MCF 10A (cell line): ENCODE measurements at regions of chr11 and their contacts with region 1.

Region 1: GRCh38 chr11:7665473-7666291 is 7.6 kb downstream of the CYB5R2 start:
- DNase-seq: peak; percentile 81
- H3K4me3 Mint-ChIP-seq: no peak overlapping the region
- H3K27ac Mint-ChIP-seq: no peak overlapping the region
- H3K4me1 Mint-ChIP-seq: no peaks in the 10 kb centered on the region
- H3K27me3 Mint-ChIP-seq: no peaks in the 10 kb centered on the region
- CTCF ChIP-seq: peak; percentile 97

Region 2: GRCh38 chr11:7353100-7353499 is 312.6 kb before region 1 on chr11:
- CTCF ChIA-PET with region 1: interaction called, 17 read pairs
- POLR2A ChIA-PET with region 1: no interaction called
- intact Hi-C with region 1: loop called (anchors 2 kb)
- DNase-seq: peak; percentile 50
- H3K4me3 Mint-ChIP-seq: no peak overlapping the region
- H3K27ac Mint-ChIP-seq: no peak overlapping the region
- H3K4me1 Mint-ChIP-seq: peaks cover 9% of the 10 kb centered on the region
- H3K27me3 Mint-ChIP-seq: peaks cover 5% of the 10 kb centered on the region
- CTCF ChIP-seq: peak; percentile 42

Region 3: GRCh38 chr11:7413961-7414915 is 251.4 kb before region 1 on chr11:
- CTCF ChIA-PET with region 1: no interaction called
- POLR2A ChIA-PET with region 1: no interaction called
- intact Hi-C with region 1: no loop called
- DNase-seq: no peak
- H3K4me3 Mint-ChIP-seq: no peak overlapping the region
- H3K27ac Mint-ChIP-seq: no peak overlapping the region
- H3K4me1 Mint-ChIP-seq: peaks cover 5% of the 10 kb centered on the region
- H3K27me3 Mint-ChIP-seq: peaks cover 37% of the 10 kb centered on the region
- CTCF ChIP-seq: no peak

Region 4: DNA sequence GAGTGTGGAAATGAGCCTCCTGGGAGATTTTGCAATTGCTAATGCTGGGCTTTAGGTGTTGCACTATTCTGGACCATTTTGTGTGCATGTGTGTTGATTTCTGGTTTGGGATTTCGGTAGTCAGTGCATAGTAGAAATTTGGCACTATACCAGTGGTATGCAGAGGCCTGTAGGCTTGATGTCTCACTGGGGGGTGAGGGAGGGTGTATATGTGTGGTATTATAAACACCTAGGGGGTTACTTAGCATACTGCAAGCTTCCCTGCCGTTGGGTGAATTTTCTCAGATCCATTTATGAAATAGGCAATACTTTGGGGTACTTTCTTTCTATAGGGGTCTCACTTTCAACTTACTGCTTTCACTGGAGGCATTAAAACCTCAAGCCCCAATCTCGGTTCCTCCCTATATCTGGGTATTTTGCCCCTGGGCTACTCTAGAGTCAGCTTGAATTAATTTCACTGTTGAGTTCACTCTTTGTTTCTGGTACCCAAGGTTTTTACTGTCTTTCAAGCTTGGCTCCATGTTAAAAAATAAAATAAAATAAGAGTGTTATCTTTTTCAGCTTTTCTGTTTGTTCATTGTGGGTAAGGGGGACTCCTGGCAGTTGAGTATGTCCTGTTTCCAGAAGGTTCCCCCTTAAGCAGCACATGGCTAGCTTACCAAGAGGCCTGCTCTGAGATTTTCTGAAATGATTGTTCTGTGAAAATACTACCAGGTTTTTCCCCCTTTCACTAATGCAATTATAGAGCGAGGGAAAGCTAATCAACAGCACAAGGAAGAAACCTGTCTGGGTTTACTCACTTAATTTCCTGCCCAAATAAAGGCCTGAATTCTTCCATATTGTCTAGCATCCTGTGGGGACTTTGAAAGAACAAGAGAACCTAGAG is 106.0 kb before region 1 on chr11:
- CTCF ChIA-PET with region 1: interaction called, 18 read pairs
- POLR2A ChIA-PET with region 1: no interaction called
- intact Hi-C with region 1: no loop called
- DNase-seq: no peak
- H3K4me3 Mint-ChIP-seq: no peak overlapping the region
- H3K27ac Mint-ChIP-seq: no peak overlapping the region
- H3K4me1 Mint-ChIP-seq: peaks cover 5% of the 10 kb centered on the region
- H3K27me3 Mint-ChIP-seq: no peaks in the 10 kb centered on the region
- CTCF ChIP-seq: no peak

Region 5: DNA sequence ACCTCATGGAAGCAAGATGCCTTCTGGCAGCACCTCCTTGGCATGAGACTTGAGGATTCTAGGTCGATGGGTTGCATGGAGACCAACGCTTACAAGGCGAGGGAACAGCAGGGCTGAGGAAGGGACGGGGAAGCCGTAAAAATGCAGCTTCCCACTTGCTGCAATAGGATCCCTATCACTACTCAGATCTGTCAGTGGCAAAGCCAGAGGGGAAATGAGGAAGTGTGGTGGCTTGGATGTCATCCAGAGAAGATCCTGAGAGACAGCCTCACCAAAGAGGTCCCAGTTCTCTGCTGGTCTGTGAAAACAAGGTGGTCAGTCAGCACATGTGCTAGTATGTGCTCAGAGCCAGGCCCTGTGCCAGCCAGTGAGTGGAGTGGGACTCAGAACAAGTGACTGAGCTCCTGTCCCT is 14.5 kb before region 1 on chr11:
- CTCF ChIA-PET with region 1: interaction called, 32 read pairs
- POLR2A ChIA-PET with region 1: no interaction called
- intact Hi-C with region 1: no loop called
- DNase-seq: no peak
- H3K4me3 Mint-ChIP-seq: no peak overlapping the region
- H3K27ac Mint-ChIP-seq: no peak overlapping the region
- H3K4me1 Mint-ChIP-seq: no peaks in the 10 kb centered on the region
- H3K27me3 Mint-ChIP-seq: no peaks in the 10 kb centered on the region
- CTCF ChIP-seq: no peak

Region 6: GRCh38 chr11:7688238-7688826 is 22.6 kb after region 1 on chr11:
- CTCF ChIA-PET with region 1: interaction called, 24 read pairs
- POLR2A ChIA-PET with region 1: no interaction called
- intact Hi-C with region 1: loop called (anchors 2 kb)
- DNase-seq: peak; percentile 32
- H3K4me3 Mint-ChIP-seq: no peak overlapping the region
- H3K27ac Mint-ChIP-seq: no peak overlapping the region
- H3K4me1 Mint-ChIP-seq: peaks cover 13% of the 10 kb centered on the region
- H3K27me3 Mint-ChIP-seq: peaks cover 11% of the 10 kb centered on the region
- CTCF ChIP-seq: peak; percentile 62